ENCODE measurements at regions of chr18 and their contacts with region 1.

Region 1: DNA sequence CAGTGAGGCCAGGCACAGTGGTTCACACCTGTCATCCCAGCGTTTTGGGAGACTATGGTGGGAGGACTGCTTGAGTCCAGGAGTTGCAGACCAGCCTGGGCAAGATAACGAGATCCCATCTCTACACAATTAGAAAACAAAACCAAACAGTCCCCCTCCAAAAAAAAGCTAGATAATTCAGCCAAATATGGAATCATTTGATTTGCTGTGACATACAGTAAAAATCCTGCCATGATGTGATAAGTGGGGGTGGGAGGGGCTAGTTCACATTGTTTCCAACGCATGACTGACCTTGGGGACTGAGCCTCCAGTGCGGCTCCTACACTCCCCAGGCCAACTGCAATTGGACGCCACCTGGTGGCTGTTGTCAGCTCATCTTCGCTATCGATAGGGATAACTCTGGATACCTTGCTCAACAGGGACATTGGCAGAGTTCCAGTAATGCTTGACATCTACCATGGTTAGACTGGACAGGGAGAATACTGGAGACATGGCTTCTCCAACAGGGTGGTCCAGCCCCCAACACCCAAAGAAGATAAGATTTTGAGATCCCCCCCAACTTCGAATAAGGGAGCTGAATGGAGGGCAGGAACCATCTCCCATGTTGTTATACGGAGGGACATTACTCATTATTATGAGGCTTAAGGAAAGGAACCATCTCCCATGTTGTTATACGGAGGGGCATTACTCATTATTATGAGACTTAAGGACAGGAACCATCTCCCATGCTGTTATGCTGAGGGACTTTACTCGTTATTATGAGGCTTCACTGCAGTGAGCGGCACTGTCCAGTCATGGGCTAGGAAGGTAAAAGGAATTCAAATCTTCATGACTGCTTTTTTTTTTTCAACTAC is 135.9 kb downstream of the TGIF1 start:
- DNase-seq: peak; percentile 69 to 83 (median 76)
- ATAC-seq: peak; percentile 55 to 95 (median 88)
- H3K4me3 ChIP-seq: no peak overlapping the region
- H3K27ac ChIP-seq: no peak overlapping the region
- H3K4me1 ChIP-seq: peaks cover 0 to 9% (median 0%) of the 10 kb centered on the region in 12 donors
- H3K27me3 ChIP-seq: no peaks in the 10 kb centered on the region
- CTCF ChIP-seq: peak; percentile 60 to 84 (median 70)
- POLR2A ChIP-seq: no peak

Region 2: DNA sequence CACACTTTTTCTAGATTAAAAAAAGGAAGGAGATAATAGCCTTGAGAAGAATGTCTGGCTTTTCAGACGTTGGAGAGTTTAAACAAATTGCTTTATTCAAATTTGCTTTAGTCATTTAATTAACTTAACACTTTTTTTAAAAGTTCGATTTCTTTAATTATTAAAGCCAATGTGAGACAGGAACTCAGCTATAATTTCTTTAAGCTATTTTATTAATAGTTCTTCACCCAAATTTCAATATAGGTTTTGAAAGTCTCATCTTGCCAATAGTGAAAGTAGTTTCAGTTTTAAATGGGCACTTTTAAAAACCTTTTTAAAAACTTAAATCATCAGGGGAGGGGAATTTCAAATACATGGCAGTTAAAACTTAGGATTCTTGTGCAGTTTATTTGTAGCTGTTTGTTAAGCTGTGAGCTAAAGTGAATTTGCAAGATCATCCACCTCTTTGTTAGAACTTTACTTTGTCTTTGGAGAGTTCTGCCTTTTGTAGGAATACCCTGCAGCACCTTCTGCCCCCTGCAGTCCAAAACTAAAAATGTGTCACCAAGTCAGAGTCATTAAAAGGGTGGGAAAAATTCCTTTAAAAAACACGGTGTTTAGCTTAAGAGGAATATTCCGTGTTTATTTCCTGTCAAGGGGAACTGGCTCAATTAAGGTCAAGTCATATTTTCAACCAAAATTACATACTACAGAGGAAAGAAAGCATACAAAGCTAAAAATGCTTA is 131.4 kb before region 1 on chr18:
- intact Hi-C with region 1: loop called in 4 of 10 experiments (anchors 5 kb)
- DNase-seq: peak in 2 of 5 donors; percentile 35 to 48
- ATAC-seq: no peak
- H3K4me3 ChIP-seq: peak overlapping the region in 11 of 12 donors; percentile 8 to 93 (median 77)
- H3K27ac ChIP-seq: peak overlapping the region; percentile 36 to 100 (median 97)
- H3K4me1 ChIP-seq: peaks cover 0 to 53% (median 20%) of the 10 kb centered on the region in 12 donors
- H3K27me3 ChIP-seq: no peaks in the 10 kb centered on the region
- CTCF ChIP-seq: peak; percentile 49 to 84 (median 73)
- POLR2A ChIP-seq: no peak